Endothelial cell of umbilical vein (primary cell): ENCODE measurements at regions of chr17 and their contacts with region 1.

Region 1: DNA sequence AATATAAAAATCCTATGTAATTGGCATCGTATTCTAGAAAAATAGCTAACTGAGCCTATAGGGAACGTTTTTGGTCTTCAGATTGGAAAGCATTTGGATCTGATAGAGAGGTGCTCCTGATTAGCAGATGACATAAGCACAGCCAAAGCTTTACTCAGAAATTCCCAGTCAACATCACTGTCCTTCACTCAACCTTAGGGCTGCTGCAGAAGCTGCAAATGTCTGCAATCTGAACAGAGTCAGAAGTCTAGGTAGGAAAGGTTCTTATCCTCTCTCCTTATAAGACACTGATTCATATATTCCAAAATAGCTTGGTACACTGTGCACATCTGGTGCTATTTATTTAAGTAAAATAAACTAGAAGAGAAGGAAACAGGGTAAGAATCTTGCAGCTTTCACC is 19.2 kb downstream of the STRADA start:
- DNase-seq: no peak
- H3K4me3 ChIP-seq: no peak overlapping the region
- H3K27ac ChIP-seq: no peak overlapping the region
- H3K4me1 ChIP-seq: no peaks in the 10 kb centered on the region
- H3K27me3 ChIP-seq: no peaks in the 10 kb centered on the region
- CTCF ChIP-seq: no peak
- POLR2A ChIP-seq: no peak

Region 2: GRCh38 chr17:63709098-63709497 is 13.3 kb before region 1 on chr17:
- CTCF ChIA-PET with region 1: interaction called, 16 read pairs
- POLR2A ChIA-PET with region 1: no interaction called
- dilution Hi-C with region 1: no loop called
- intact Hi-C with region 1: no loop called
- DNase-seq: no peak
- H3K4me3 ChIP-seq: no peak overlapping the region
- H3K27ac ChIP-seq: no peak overlapping the region
- H3K4me1 ChIP-seq: peaks cover 8% of the 10 kb centered on the region
- H3K27me3 ChIP-seq: no peaks in the 10 kb centered on the region
- CTCF ChIP-seq: no peak
- POLR2A ChIP-seq: no peak